PC-9 (cell line): ENCODE measurements at regions of chr17 and their contacts with region 1.

Region 1: DNA sequence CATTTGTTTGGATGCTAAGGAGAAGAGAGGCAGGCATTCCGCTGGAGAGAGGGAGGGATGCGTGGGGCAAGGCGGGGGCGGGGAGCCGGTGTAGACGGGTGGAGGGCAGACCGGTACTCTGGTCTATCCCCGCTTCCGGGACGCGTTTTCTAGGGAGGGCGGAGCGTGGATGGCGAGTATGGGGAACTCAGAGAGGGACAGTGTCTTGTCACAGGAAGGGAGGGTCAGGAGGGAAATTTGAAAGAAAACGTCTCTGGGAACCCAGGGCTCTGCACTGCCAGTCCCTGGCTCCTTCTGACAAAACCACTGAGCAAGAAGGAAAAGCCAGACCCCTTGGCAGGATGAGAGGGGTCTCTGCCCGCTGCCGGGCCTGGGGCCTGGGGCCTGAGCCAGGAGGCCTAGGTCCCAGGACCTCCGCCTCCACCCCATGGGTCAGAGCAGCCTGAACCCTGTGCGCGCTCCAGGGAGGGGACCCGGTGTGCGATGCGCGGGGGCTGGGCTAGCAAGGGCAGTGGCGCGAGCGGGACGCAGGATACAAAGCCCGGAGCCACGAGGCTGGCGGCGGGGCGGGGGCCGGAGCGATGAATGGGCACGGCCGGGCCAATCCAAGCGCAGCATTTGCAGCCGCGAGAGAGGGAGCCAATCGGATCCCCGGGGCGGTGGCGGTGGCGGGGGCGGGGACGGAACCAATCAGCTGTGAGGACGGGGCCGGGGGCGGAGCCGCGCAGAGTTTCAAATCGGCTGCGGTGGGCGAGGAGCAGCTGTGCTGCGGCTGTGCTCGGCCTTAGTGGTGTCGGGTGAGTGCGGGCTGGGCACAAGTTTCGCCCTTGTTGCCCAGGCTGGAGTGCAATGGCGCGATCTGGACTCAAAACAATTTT is at the start of gene PIMREG:
- DNase-seq: peak; percentile 85 to 98
- H3K4me3 ChIP-seq: peak within 1 kb of the TSS; percentile 90
- H3K27ac ChIP-seq: peak within 1 kb of the TSS; percentile 54
- H3K4me1 ChIP-seq: peaks cover 5% of the 10 kb centered on the region; the same call in 1 of the 2 replicates
- H3K27me3 ChIP-seq: 0 out of 2 replicates have a peak, but pooled peaks cover 6% of the 10 kb centered on the region
- CTCF ChIP-seq: no peak
- total RNA-seq, gene PIMREG: 52.2 and 62.3 TPM in 2 replicates

Region 2: DNA sequence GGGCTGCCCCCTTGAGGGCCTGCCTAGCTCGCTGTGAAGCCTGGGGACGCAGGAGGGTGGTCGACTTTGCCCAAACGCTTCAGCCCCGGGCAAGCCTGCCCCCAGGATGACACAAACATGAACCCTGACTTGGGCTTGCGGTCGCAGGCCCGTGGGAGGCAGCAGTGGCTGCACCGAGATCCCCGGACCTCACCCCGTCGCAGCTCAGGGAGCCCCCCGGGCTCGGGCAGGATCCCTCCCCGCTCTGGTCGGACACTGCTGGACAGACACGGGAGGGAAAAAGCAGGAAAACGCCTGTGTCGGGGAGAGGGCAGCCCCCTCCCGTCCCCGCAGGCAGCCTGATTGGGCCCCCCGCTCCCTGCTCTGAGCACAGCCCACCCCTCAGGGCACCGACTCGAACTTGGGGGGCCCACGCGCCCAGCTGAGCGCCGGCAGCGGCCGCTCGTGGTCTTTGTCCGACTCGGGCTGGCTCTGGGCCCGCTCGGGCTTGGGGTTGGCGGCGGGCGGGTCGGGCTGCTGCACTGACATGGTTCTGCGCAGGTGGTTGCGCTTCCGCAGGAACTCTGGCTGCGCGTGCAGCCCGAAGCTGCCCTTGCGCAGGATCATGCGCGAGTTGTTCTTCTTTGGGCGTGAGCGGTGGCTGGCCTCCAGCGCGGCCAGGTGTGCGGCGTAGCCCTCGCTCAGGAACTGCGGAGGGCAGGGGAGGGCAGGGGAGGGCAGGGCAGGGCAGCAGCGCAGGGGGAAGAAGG is 11.2 kb after region 1 on chr17:
- CTCF ChIA-PET with region 1: interaction called, 10 read pairs
- POLR2A ChIA-PET with region 1: no interaction called
- intact Hi-C with region 1: no loop called
- DNase-seq: no peak
- H3K4me3 ChIP-seq: no peak overlapping the region
- H3K27ac ChIP-seq: no peak overlapping the region
- H3K4me1 ChIP-seq: peaks cover 12% of the 10 kb centered on the region
- H3K27me3 ChIP-seq: no peaks in the 10 kb centered on the region
- CTCF ChIP-seq: no peak

Region 3: DNA sequence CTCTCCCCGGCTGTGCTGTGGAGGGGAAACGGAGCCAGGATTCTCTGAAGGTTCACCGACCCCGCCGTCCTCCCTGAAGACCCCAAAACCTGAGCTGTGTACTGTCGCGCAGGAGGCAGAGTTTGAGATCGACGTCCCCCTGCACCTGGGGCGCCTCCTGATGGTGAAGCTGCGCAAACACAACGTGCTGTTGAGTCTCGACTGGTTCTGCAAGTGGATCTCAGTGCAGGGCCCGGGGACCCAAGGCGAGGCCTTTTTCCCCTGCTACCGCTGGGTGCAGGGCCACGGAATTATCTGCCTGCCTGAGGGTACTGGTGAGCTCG is 450.2 kb after region 1 on chr17:
- CTCF ChIA-PET with region 1: interaction called, 16 read pairs
- POLR2A ChIA-PET with region 1: no interaction called
- intact Hi-C with region 1: no loop called
- DNase-seq: no peak
- H3K4me3 ChIP-seq: no peak overlapping the region
- H3K27ac ChIP-seq: no peak overlapping the region
- H3K4me1 ChIP-seq: no peaks in the 10 kb centered on the region
- H3K27me3 ChIP-seq: peaks cover 41% of the 10 kb centered on the region
- CTCF ChIP-seq: no peak; the same call in 1 of the 2 replicates